MCF 10A (cell line): ENCODE measurements at regions of chr7 and their contacts with region 1.

Region 1: GRCh38 chr7:2800931-2801688 is 43.0 kb downstream of the GNA12 start:
- DNase-seq: peak; percentile 43
- H3K4me3 Mint-ChIP-seq: no peak overlapping the region
- H3K27ac Mint-ChIP-seq: no peak overlapping the region
- H3K4me1 Mint-ChIP-seq: peaks cover 34% of the 10 kb centered on the region
- H3K27me3 Mint-ChIP-seq: no peaks in the 10 kb centered on the region
- CTCF ChIP-seq: no peak

Region 2: GRCh38 chr7:2373124-2373556 is 428.0 kb before region 1 on chr7:
- CTCF ChIA-PET with region 1: no interaction called
- POLR2A ChIA-PET with region 1: no interaction called
- intact Hi-C with region 1: no loop called
- DNase-seq: peak; percentile 82
- H3K4me3 Mint-ChIP-seq: no peak overlapping the region
- H3K27ac Mint-ChIP-seq: no peak overlapping the region
- H3K4me1 Mint-ChIP-seq: peaks cover 11% of the 10 kb centered on the region
- H3K27me3 Mint-ChIP-seq: no peaks in the 10 kb centered on the region
- CTCF ChIP-seq: no peak

Region 3: GRCh38 chr7:2821161-2821841 is 20.2 kb after region 1 on chr7:
- CTCF ChIA-PET with region 1: no interaction called
- POLR2A ChIA-PET with region 1: interaction called, 11 read pairs
- intact Hi-C with region 1: no loop called
- DNase-seq: peak; percentile 85
- H3K4me3 Mint-ChIP-seq: peak overlapping the region; percentile 36
- H3K27ac Mint-ChIP-seq: peak overlapping the region; percentile 96
- H3K4me1 Mint-ChIP-seq: peaks cover 41% of the 10 kb centered on the region
- H3K27me3 Mint-ChIP-seq: no peaks in the 10 kb centered on the region
- CTCF ChIP-seq: no peak